ENCODE measurements at regions of chr9 and their contacts with region 1.

Region 1: DNA sequence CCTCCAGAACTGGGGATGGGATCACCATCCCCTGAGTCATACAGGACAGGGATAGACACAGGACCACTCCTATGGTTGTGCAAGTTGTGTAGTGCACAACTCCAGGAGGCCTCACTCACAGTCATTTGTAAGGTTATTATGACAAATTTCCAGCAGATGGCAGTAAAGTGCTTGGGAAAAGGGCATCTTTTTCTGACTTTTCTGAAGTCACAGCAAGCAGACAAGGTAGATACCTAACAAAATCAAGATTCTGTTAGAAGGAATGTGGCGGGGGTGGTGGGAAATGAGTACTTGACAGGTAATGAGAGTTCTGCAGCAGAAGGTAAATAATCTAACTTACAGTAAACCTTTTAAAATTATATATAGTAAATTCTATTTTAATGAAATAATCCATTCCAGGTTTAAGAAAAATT is 16.7 kb upstream of the KIF27 start:
- DNase-seq: peak in 1 of 10 donors; percentile 19
- H3K4me3 ChIP-seq: no peak overlapping the region
- H3K27ac ChIP-seq: no peak overlapping the region
- H3K27me3 ChIP-seq: no peaks in the 10 kb centered on the region
- CTCF ChIP-seq: peak; percentile 53 to 94 (median 81)

Region 2: GRCh38 chr9:84170521-84171141 is 232.7 kb after region 1 on chr9:
- intact Hi-C with region 1: loop called (anchors 2 to 10 kb)
- DNase-seq: peak in 4 of 10 donors; percentile 33 to 95 (median 44)
- H3K4me3 ChIP-seq: no peak overlapping the region
- H3K27ac ChIP-seq: peak overlapping the region in 1 of 59 donors; percentile 72
- H3K27me3 ChIP-seq: no peaks in the 10 kb centered on the region
- CTCF ChIP-seq: no peak

Region 3: DNA sequence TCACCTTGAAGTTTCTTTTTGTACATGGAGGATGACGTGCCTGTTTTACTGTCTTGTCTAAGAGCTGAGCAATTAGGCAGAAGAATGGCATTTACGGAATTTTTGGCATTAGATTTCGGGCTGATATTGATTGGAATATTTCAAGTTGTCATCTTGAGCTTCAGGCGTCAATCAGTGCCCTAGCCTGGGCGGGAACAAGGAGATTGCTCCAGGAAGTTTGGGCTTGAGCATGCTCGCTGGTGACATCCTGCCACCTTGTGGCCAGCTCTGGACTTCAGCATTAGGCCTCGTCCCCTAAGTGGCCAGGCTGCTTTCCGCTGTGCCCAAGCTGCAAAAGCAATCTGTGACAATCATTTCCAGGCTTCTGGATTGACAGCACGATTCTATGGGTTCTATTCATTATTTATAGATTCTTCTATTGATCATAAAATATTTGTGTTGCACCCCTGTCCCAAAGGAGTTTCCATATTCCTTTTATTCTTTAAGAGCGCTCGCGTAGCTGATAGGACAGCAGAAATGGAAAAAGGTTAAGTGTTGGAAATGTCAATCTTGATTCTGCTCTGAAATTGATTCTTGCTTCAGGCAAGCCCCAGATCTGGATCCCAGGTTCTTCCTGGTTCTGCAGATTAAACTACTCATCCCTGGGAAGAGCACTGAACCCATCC is 323.3 kb after region 1 on chr9:
- intact Hi-C with region 1: loop called (anchors 1 to 5 kb)
- DNase-seq: peak; percentile 68 to 89 (median 84)
- H3K4me3 ChIP-seq: peak overlapping the region in 42 of 59 donors; percentile 0 to 57 (median 35)
- H3K27ac ChIP-seq: peak overlapping the region in 1 of 59 donors; percentile 28
- H3K27me3 ChIP-seq: peaks cover 0 to 10% (median 0%) of the 10 kb centered on the region in 45 donors
- CTCF ChIP-seq: peak; percentile 77 to 99 (median 93)

Region 4: GRCh38 chr9:84315278-84315877 is 377.5 kb after region 1 on chr9:
- intact Hi-C with region 1: loop called in 1 of 2 experiments (anchors 1 kb)
- DNase-seq: peak in 7 of 10 donors; percentile 41 to 67 (median 56)
- H3K4me3 ChIP-seq: peak overlapping the region in 10 of 59 donors; percentile 9 to 46 (median 24)
- H3K27ac ChIP-seq: no peak overlapping the region
- H3K27me3 ChIP-seq: peaks cover 0 to 8% (median 0%) of the 10 kb centered on the region in 45 donors
- CTCF ChIP-seq: peak; percentile 64 to 94 (median 84)